Caco-2 (cell line): ENCODE measurements at regions of chr3 and their contacts with region 1.

Region 1: GRCh38 chr3:171049861-171050444 is 23.4 kb upstream of the SLC2A2 start:
- DNase-seq: peak; percentile 60 to 70
- H3K4me3 ChIP-seq: no peak overlapping the region
- H3K4me3 Mint-ChIP-seq: no peak overlapping the region
- H3K27ac Mint-ChIP-seq: no peak overlapping the region
- H3K4me1 ChIP-seq: peaks cover 42% of the 10 kb centered on the region
- H3K4me1 Mint-ChIP-seq: peaks cover 42% of the 10 kb centered on the region
- H3K27me3 ChIP-seq: no peaks in the 10 kb centered on the region
- H3K27me3 Mint-ChIP-seq: no peaks in the 10 kb centered on the region
- CTCF ChIP-seq: peak; percentile 72 to 74

Region 2: GRCh38 chr3:170961616-170962400 is 88.1 kb before region 1 on chr3:
- CTCF ChIA-PET with region 1: interaction called, 12 read pairs
- POLR2A ChIA-PET with region 1: no interaction called
- intact Hi-C with region 1: loop called (anchors 1 kb)
- DNase-seq: peak in 1 of 2 experiments; percentile 33
- H3K4me3 ChIP-seq: no peak overlapping the region
- H3K4me3 Mint-ChIP-seq: no peak overlapping the region
- H3K27ac Mint-ChIP-seq: peak overlapping the region; percentile 40
- H3K4me1 ChIP-seq: peaks cover 7% of the 10 kb centered on the region
- H3K4me1 Mint-ChIP-seq: peaks cover 15% of the 10 kb centered on the region
- H3K27me3 ChIP-seq: no peaks in the 10 kb centered on the region
- H3K27me3 Mint-ChIP-seq: no peaks in the 10 kb centered on the region
- CTCF ChIP-seq: peak; percentile 50 to 82

Region 3: GRCh38 chr3:171028025-171028778 is 21.8 kb before region 1 on chr3:
- CTCF ChIA-PET with region 1: interaction called, 3 read pairs
- POLR2A ChIA-PET with region 1: no interaction called
- intact Hi-C with region 1: loop called (anchors 1 kb)
- DNase-seq: peak; percentile 73 to 80
- H3K4me3 ChIP-seq: peak overlapping the region; percentile 42
- H3K4me3 Mint-ChIP-seq: no peak overlapping the region
- H3K27ac Mint-ChIP-seq: no peak overlapping the region
- H3K4me1 ChIP-seq: peaks cover 40% of the 10 kb centered on the region
- H3K4me1 Mint-ChIP-seq: peaks cover 20% of the 10 kb centered on the region
- H3K27me3 ChIP-seq: no peaks in the 10 kb centered on the region
- H3K27me3 Mint-ChIP-seq: no peaks in the 10 kb centered on the region
- CTCF ChIP-seq: no peak

Region 4: DNA sequence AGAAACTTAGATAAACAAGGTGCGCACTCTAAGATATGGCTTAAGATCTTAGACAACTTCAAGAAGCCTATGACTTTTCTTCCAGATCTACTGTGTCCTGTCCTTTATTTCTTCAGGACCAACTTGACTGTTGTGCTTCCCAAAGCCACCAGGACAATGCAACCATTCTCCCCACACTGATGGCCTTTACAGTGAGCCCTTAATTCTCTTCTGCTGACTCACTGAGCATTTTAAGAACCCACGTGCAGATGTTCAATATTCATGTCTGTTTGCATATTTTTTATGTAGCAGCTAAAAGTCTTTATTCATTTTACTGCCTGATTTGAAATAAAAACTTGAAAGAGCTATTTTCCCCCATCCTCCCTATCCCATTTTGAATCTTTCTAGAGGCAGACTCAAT is 79.9 kb after region 1 on chr3:
- CTCF ChIA-PET with region 1: no interaction called
- POLR2A ChIA-PET with region 1: no interaction called
- intact Hi-C with region 1: loop called (anchors 1 kb)
- DNase-seq: no peak
- H3K4me3 ChIP-seq: no peak overlapping the region
- H3K4me3 Mint-ChIP-seq: peak overlapping the region; percentile 54
- H3K27ac Mint-ChIP-seq: peak overlapping the region; percentile 92
- H3K4me1 ChIP-seq: peaks cover 49% of the 10 kb centered on the region
- H3K4me1 Mint-ChIP-seq: peaks cover 27% of the 10 kb centered on the region
- H3K27me3 ChIP-seq: no peaks in the 10 kb centered on the region
- H3K27me3 Mint-ChIP-seq: no peaks in the 10 kb centered on the region
- CTCF ChIP-seq: no peak

Region 5: GRCh38 chr3:171187706-171188290 is 137.8 kb after region 1 on chr3:
- CTCF ChIA-PET with region 1: interaction called, 5 read pairs
- POLR2A ChIA-PET with region 1: no interaction called
- intact Hi-C with region 1: loop called (anchors 1 kb)
- DNase-seq: peak in 1 of 2 experiments; percentile 45
- H3K4me3 ChIP-seq: no peak overlapping the region
- H3K4me3 Mint-ChIP-seq: no peak overlapping the region
- H3K27ac Mint-ChIP-seq: no peak overlapping the region
- H3K4me1 ChIP-seq: peaks cover 22% of the 10 kb centered on the region
- H3K4me1 Mint-ChIP-seq: peaks cover 13% of the 10 kb centered on the region
- H3K27me3 ChIP-seq: no peaks in the 10 kb centered on the region
- H3K27me3 Mint-ChIP-seq: no peaks in the 10 kb centered on the region
- CTCF ChIP-seq: peak; percentile 59

Region 6: GRCh38 chr3:171213178-171213577 is 163.2 kb after region 1 on chr3:
- CTCF ChIA-PET with region 1: no interaction called
- POLR2A ChIA-PET with region 1: no interaction called
- intact Hi-C with region 1: no loop called
- DNase-seq: no peak
- H3K4me3 ChIP-seq: no peak overlapping the region
- H3K4me3 Mint-ChIP-seq: no peak overlapping the region
- H3K27ac Mint-ChIP-seq: no peak overlapping the region
- H3K4me1 ChIP-seq: no peaks in the 10 kb centered on the region
- H3K4me1 Mint-ChIP-seq: no peaks in the 10 kb centered on the region
- H3K27me3 ChIP-seq: no peaks in the 10 kb centered on the region
- H3K27me3 Mint-ChIP-seq: no peaks in the 10 kb centered on the region
- CTCF ChIP-seq: no peak

Region 7: DNA sequence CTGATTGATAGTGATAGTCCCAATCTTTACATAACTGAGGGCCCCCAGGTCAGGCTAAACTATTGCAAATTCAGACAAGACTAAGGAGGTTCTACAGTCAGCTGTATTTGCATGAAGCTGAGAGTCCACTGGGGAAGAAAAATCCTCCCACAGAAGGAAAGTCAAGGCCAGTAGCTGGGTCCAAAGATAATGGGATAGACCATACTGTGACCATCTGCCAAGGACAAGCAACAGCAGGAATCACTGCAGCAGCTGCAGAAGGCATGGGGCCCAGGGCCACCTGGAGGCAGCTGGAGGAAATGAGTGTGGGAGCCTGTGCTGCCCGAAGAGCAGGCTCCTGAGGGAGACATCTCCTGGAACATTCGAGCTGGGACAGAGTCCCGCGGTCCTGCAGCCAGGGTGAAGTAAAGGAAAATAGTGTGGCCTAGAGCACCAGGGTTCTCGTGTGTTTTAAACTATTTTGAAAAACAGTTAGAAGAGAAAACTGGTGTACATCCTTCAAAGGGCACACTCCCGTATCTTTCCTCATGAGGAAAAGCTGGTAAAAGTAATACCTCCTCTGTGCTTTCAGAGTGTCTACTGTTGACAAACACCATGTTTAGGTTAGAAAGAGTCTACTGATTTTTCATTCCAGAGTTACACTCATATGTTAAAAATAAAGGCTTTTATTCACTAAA is 780.0 kb after region 1 on chr3:
- CTCF ChIA-PET with region 1: no interaction called
- POLR2A ChIA-PET with region 1: no interaction called
- intact Hi-C with region 1: loop called (anchors 5 kb)
- DNase-seq: peak; percentile 80 to 81
- H3K4me3 ChIP-seq: no peak overlapping the region
- H3K4me3 Mint-ChIP-seq: no peak overlapping the region
- H3K27ac Mint-ChIP-seq: no peak overlapping the region
- H3K4me1 ChIP-seq: peaks cover 12% of the 10 kb centered on the region; the same call in 1 of the 2 replicates
- H3K4me1 Mint-ChIP-seq: peaks cover 5% of the 10 kb centered on the region
- H3K27me3 ChIP-seq: no peaks in the 10 kb centered on the region
- H3K27me3 Mint-ChIP-seq: no peaks in the 10 kb centered on the region
- CTCF ChIP-seq: peak; percentile 64 to 87